Activated T-helper 1 cell treated with anti-CD3 and anti-CD28 coated beads, Interleukin-12 subunit alpha, Interleukin-12 subunit beta, Interleukin-2, Interleukin-4 antibody, amounts not matched to agents 30 ng/mL and 10 ng/mL and 1 ng/mL, durations not matched to agents 14 hours and 24 hours and 36 hours (primary cell): ENCODE measurements at regions of chr6 and their contacts with region 1.

Region 1: GRCh38 chr6:41787219-41787917 is at the start of gene TOMM6:
- DNase-seq: peak; percentile 95
- H3K4me3 Mint-ChIP-seq: peak within 1 kb of the TSS; percentile 97
- H3K27ac Mint-ChIP-seq: peak within 1 kb of the TSS; percentile 93
- H3K4me1 Mint-ChIP-seq: peaks cover 17% of the 10 kb centered on the region
- H3K27me3 Mint-ChIP-seq: peaks cover 12% of the 10 kb centered on the region
- total RNA-seq, gene TOMM6: 334 and 338 TPM in 2 replicates

Region 2: DNA sequence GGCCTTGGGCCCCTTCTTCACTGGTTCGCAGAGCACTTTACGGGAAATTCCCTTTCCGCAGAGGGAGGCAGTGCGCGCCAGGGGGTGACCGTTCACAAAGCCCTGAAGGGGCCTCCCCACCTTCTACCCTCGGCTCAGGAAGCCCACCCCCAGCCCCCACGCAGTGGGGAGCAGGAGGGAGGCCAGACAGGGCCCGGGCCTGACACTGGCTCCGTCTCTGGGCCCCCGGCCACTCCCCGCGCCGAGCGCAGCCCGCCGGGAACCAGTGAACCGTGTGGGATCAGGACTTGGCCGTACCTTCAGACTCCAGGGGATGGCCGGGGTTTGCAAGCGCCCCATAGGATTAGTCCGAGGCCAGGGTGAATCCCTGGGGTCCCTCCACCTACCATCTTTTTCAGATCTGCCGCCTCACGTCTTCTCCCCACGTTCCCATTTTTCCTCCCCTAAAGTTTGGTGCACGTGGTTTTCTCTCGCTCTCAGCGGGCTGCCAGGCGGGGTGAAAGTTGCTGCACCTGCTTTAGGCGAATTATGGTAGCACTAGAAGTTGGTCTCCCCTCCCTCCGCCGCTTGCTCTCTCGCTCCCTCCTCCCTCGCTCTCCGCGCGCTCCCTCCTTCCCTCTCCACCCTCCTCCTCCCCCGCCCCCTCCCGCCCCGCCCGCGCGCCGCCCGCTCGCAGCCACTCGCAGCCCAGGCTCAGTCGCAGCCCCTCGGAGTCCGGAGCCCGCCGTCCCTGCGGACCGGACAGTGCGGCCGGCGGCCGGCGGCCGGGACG is 241.5 kb before region 1 on chr6 and contains the start of gene FOXP4:
- intact Hi-C with region 1: loop called (anchors 5 kb)
- DNase-seq: peak; percentile 77
- H3K4me3 Mint-ChIP-seq: peak within 1 kb of the TSS; percentile 88
- H3K27ac Mint-ChIP-seq: peak within 1 kb of the TSS; percentile 90
- H3K4me1 Mint-ChIP-seq: peaks cover 34% of the 10 kb centered on the region
- H3K27me3 Mint-ChIP-seq: peaks cover 39% of the 10 kb centered on the region
- total RNA-seq, gene FOXP4: 21.6 and 24.0 TPM in 2 replicates

Region 3: GRCh38 chr6:41723530-41724227 is 63.7 kb before region 1 on chr6:
- intact Hi-C with region 1: no loop called
- DNase-seq: no peak
- H3K4me3 Mint-ChIP-seq: no peak overlapping the region
- H3K27ac Mint-ChIP-seq: no peak overlapping the region
- H3K4me1 Mint-ChIP-seq: peaks cover 5% of the 10 kb centered on the region
- H3K27me3 Mint-ChIP-seq: no peaks in the 10 kb centered on the region

Region 4: GRCh38 chr6:41768545-41769308 is 18.6 kb before region 1 on chr6:
- intact Hi-C with region 1: no loop called
- DNase-seq: no peak
- H3K4me3 Mint-ChIP-seq: no peak overlapping the region
- H3K27ac Mint-ChIP-seq: no peak overlapping the region
- H3K4me1 Mint-ChIP-seq: peaks cover 12% of the 10 kb centered on the region
- H3K27me3 Mint-ChIP-seq: peaks cover 5% of the 10 kb centered on the region

Region 5: DNA sequence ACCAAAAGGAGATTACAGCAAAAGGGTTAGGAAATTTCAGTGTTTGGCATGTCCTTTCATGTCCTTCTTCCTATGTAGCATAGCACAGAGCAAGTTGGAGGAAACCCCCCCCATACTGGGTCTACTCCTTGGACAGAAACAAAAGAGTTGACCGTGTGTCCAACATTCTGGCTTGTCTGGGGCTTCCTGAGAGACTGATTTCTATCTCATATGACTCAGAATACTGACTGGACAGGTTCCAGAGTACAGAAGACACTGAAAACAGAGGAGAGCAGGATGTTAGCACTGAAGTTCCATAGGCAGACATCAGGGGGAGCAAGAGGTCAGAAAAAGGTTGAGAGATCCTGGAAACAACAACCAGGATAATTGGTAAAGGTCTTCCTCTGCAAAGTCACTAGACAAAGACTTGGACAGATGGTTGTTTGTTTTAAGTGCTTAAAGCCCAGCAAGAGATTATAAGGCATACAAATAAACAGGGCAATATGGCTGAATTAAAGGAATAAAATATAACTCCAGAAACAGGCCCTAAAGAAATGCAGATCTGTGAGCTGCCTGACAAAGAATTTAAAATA is 59.4 kb after region 1 on chr6:
- intact Hi-C with region 1: loop called (anchors 2 kb)
- DNase-seq: peak; percentile 31
- H3K4me3 Mint-ChIP-seq: no peak overlapping the region
- H3K27ac Mint-ChIP-seq: no peak overlapping the region
- H3K4me1 Mint-ChIP-seq: peaks cover 11% of the 10 kb centered on the region
- H3K27me3 Mint-ChIP-seq: no peaks in the 10 kb centered on the region

Region 6: DNA sequence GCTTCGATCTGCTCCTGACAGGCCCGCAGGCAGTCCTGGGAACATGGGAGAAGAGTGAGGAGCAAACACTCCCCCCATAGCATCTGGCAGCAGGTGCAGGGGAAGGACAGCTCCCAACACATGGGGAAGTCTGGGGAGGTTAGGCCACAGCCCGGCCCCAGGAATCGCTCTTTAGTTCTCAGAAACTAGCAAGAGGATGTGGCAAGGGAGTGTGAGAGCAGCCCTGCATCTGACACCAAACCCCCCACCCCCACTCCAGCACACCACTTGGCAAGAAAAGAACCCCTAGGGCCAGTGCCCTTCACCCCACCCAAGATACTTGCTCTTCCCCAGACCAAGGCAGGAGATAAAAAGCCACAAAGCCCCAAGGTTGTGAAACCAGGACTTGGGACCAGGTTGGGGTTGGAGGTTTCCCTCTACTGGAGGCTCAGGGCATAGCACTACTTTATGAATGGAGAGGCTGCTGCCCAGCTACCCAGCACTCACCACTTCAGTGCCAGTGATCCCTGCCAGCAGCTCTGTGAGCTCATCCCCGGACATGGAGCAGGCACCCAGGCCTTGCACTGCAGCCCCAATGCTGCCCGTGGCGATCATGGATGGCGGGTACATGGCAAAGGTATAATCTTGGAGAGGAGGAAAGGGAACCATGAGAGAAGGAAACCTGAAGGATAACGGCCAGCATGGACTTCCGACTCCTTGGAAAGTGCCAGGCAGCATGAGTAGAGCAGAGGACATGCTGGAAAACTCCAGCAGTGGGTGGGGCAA is 148.9 kb after region 1 on chr6:
- intact Hi-C with region 1: loop called (anchors 1 kb)
- DNase-seq: peak; percentile 83
- H3K4me3 Mint-ChIP-seq: peak overlapping the region; percentile 99
- H3K27ac Mint-ChIP-seq: peak overlapping the region; percentile 84
- H3K4me1 Mint-ChIP-seq: peaks cover 77% of the 10 kb centered on the region
- H3K27me3 Mint-ChIP-seq: no peaks in the 10 kb centered on the region

Region 7: GRCh38 chr6:42104095-42104806 is 316.9 kb after region 1 on chr6:
- intact Hi-C with region 1: loop called (anchors 2 kb)
- DNase-seq: peak; percentile 60
- H3K4me3 Mint-ChIP-seq: peak overlapping the region; percentile 70
- H3K27ac Mint-ChIP-seq: peak overlapping the region; percentile 67
- H3K4me1 Mint-ChIP-seq: peaks cover 39% of the 10 kb centered on the region
- H3K27me3 Mint-ChIP-seq: peaks cover 1% of the 10 kb centered on the region